Activated T-helper 1 cell treated with anti-CD3 and anti-CD28 coated beads, Interleukin-12 subunit alpha, Interleukin-12 subunit beta, Interleukin-2, Interleukin-4 antibody, amounts not matched to agents 30 ng/mL and 10 ng/mL and 1 ng/mL, durations not matched to agents 14 hours and 24 hours and 36 hours (primary cell): ENCODE measurements at regions of chr7 and their contacts with region 1.

Region 1: GRCh38 chr7:74449809-74450397 is 3.8 kb upstream of the GTF2IRD1 start:
- DNase-seq: peak; percentile 47
- H3K4me3 Mint-ChIP-seq: no peak overlapping the region
- H3K27ac Mint-ChIP-seq: no peak overlapping the region
- H3K4me1 Mint-ChIP-seq: peaks cover 12% of the 10 kb centered on the region
- H3K27me3 Mint-ChIP-seq: peaks cover 12% of the 10 kb centered on the region

Region 2: GRCh38 chr7:74466196-74466813 is 16.4 kb after region 1 on chr7:
- intact Hi-C with region 1: no loop called
- DNase-seq: no peak
- H3K4me3 Mint-ChIP-seq: no peak overlapping the region
- H3K27ac Mint-ChIP-seq: no peak overlapping the region
- H3K4me1 Mint-ChIP-seq: peaks cover 5% of the 10 kb centered on the region
- H3K27me3 Mint-ChIP-seq: no peaks in the 10 kb centered on the region

Region 3: GRCh38 chr7:74482629-74483401 is 32.9 kb after region 1 on chr7:
- intact Hi-C with region 1: no loop called
- DNase-seq: no peak
- H3K4me3 Mint-ChIP-seq: no peak overlapping the region
- H3K27ac Mint-ChIP-seq: no peak overlapping the region
- H3K4me1 Mint-ChIP-seq: no peaks in the 10 kb centered on the region
- H3K27me3 Mint-ChIP-seq: no peaks in the 10 kb centered on the region

Region 4: DNA sequence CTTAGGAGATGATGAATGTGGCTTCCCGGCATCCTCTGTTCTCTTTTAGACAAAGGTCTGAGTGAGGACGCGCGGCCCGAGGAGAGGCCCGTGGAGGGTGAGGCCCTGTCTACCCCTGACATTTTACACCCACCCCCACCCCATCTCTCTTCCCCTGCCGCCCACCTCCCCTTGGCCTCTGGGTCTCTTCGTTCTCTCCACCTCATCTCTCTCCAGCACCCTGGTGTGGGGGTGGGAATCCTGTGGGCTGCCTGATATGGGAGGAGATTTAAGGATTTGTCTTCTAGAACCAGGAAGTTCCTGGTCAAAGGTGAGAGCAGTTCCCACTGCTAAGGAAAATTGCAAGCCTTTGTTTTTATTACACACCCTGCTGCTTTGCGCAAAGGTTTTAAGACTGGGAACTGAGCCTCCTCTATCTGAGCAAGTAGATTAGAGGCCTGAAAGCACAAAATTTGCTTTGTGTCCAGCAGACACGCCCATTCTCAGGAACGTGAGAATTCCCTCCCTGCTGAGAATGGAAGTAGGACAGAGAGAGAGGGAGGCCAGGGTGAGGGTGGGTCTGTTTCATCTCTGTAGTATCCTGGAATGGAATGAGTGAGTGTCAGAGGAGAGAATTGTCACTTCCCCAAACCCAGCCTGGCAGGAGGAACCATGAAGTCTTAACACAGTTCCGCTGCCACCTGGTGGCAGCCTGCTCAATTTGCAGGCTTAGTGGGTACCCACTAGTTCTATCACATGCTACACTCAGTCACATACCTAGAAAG is 95.0 kb after region 1 on chr7:
- intact Hi-C with region 1: loop called (anchors 1 kb)
- DNase-seq: no peak
- H3K4me3 Mint-ChIP-seq: no peak overlapping the region
- H3K27ac Mint-ChIP-seq: no peak overlapping the region
- H3K4me1 Mint-ChIP-seq: no peaks in the 10 kb centered on the region
- H3K27me3 Mint-ChIP-seq: no peaks in the 10 kb centered on the region